IMR-90 (cell line): ENCODE measurements at regions of chr11 and their contacts with region 1.

Region 1: GRCh38 chr11:130069684-130070108 is at the start of gene APLP2:
- DNase-seq: peak; percentile 97
- ATAC-seq: peak; percentile 96
- H3K4me3 ChIP-seq: peak within 1 kb of the TSS; percentile 90
- H3K27ac ChIP-seq: peak within 1 kb of the TSS; percentile 95
- H3K4me1 ChIP-seq: peaks cover 4% of the 10 kb centered on the region; the same call in 1 of the 2 replicates
- H3K27me3 ChIP-seq: peaks cover 1% of the 10 kb centered on the region; the same call in 1 of the 2 replicates
- CTCF ChIP-seq: no peak
- POLR2A ChIP-seq: peak; percentile 98
- RAD21 ChIP-seq: no peak
- total RNA-seq, gene APLP2: 127 and 134 TPM in 2 replicates

Region 2: DNA sequence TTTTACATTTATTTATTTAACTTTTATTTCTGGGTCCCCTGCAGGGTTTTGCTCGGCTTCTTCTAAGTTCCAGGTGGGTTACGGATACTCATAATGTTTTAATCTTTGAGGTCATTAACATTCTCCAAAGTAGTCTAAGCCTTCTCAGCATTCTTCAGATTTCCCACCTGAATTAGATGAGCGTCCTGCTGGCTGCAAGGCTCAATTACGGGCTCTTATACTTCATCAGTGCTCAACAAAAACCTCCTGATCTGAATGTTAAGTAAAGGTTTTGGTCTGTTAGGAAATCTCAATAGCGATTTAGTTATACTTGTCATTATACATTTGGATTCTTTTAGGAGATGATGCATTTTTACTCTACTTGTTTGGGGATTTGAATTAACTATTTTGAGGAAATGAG is 147.0 kb before region 1 on chr11:
- CTCF ChIA-PET with region 1: interaction called, 3 read pairs
- POLR2A ChIA-PET with region 1: no interaction called
- dilution Hi-C with region 1: no loop called
- in situ Hi-C with region 1: no loop called
- intact Hi-C with region 1: loop called (anchors 1 kb)
- DNase-seq: no peak
- ATAC-seq: no peak
- H3K4me3 ChIP-seq: no peak overlapping the region
- H3K27ac ChIP-seq: no peak overlapping the region
- H3K4me1 ChIP-seq: no peaks in the 10 kb centered on the region
- H3K27me3 ChIP-seq: no peaks in the 10 kb centered on the region
- CTCF ChIP-seq: no peak
- POLR2A ChIP-seq: no peak
- RAD21 ChIP-seq: no peak

Region 3: DNA sequence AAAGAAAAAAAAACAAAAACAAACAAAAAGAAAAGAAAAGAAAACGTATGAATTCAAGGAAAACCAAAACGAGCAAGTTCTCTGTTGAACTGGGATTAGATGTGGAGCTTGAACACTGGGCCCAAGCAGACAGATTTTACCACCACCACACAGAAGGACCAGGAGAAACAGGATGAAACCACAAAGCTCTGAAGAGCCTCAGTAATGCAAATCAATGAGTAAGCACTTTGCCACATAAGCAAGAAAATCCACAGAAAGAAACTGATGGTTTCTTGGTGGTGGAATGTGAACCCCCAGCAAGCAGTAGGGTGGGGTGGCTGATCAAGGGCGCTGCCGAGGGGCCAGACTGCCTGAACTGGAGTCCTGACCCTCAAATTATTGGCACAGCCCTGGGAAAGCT is 123.4 kb before region 1 on chr11:
- CTCF ChIA-PET with region 1: no interaction called
- POLR2A ChIA-PET with region 1: interaction called, 10 read pairs
- dilution Hi-C with region 1: no loop called
- in situ Hi-C with region 1: no loop called
- intact Hi-C with region 1: no loop called
- DNase-seq: peak; percentile 27
- ATAC-seq: peak; percentile 49; the same call in 1 of the 2 replicates
- H3K4me3 ChIP-seq: no peak overlapping the region
- H3K27ac ChIP-seq: no peak overlapping the region
- H3K4me1 ChIP-seq: no peaks in the 10 kb centered on the region; the same call in 1 of the 2 replicates
- H3K27me3 ChIP-seq: no peaks in the 10 kb centered on the region
- CTCF ChIP-seq: no peak
- POLR2A ChIP-seq: no peak
- RAD21 ChIP-seq: no peak

Region 4: DNA sequence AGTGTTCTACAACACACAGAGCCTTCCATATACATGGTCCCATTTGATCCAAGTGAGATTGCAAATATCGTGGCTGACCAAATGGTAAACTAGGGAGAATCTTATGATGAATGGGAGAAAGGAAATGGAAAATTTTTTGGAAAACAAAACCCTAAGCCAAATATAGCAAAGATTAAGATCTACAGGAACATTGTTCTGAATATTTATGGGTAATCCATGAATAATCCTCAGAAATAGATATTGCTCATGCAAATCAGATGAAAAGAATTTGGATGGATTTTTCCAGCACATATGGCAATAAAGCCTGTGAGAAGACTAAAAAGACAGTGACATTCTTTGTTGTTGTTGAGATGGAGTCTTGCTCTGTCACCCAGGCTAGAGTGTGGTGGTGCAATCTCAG is 45.3 kb before region 1 on chr11:
- CTCF ChIA-PET with region 1: no interaction called
- POLR2A ChIA-PET with region 1: no interaction called
- dilution Hi-C with region 1: no loop called
- in situ Hi-C with region 1: no loop called
- intact Hi-C with region 1: loop called (anchors 1 kb)
- DNase-seq: no peak
- ATAC-seq: no peak
- H3K4me3 ChIP-seq: no peak overlapping the region
- H3K27ac ChIP-seq: no peak overlapping the region
- H3K4me1 ChIP-seq: peaks cover 4% of the 10 kb centered on the region
- H3K27me3 ChIP-seq: no peaks in the 10 kb centered on the region
- CTCF ChIP-seq: no peak
- POLR2A ChIP-seq: no peak
- RAD21 ChIP-seq: no peak

Region 5: GRCh38 chr11:130131961-130132850 is 62.5 kb after region 1 on chr11:
- CTCF ChIA-PET with region 1: interaction called, 10 read pairs
- POLR2A ChIA-PET with region 1: no interaction called
- dilution Hi-C with region 1: no loop called
- in situ Hi-C with region 1: no loop called
- intact Hi-C with region 1: no loop called
- DNase-seq: peak; percentile 66
- ATAC-seq: peak; percentile 96
- H3K4me3 ChIP-seq: no peak overlapping the region
- H3K27ac ChIP-seq: no peak overlapping the region
- H3K4me1 ChIP-seq: no peaks in the 10 kb centered on the region
- H3K27me3 ChIP-seq: no peaks in the 10 kb centered on the region
- CTCF ChIP-seq: peak; percentile 90
- POLR2A ChIP-seq: 0 out of 2 replicates have a peak, but pooled peaks have one; percentile 25
- RAD21 ChIP-seq: peak; percentile 94